ENCODE measurements at regions of chr2 and their contacts with region 1.

Region 1: DNA sequence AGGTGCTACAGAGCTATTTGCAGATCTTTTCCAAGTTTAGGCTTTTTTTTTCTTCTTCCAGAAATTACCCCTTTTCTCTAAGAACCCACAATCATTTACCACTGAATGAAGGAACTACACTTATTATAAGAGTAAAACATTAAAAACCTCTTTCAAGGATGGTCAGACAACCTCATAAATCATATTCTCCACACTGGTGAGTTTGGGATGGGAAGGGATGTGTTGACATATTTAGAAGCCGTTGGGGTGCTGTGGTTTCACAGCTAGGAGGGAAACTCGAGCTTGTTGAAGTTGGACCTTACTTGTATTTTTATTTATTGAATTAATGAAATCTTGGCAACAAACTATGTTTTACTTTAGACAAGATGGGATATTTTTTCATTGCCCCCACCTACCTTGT is 289.4 kb upstream of the MEIS1 start:
- DNase-seq: no peak
- H3K4me3 ChIP-seq: no peak overlapping the region
- H3K27ac ChIP-seq: no peak overlapping the region
- H3K4me1 ChIP-seq: no peaks in the 10 kb centered on the region
- H3K27me3 ChIP-seq: no peaks in the 10 kb centered on the region
- CTCF ChIP-seq: no peak
- POLR2A ChIP-seq: no peak

Region 2: DNA sequence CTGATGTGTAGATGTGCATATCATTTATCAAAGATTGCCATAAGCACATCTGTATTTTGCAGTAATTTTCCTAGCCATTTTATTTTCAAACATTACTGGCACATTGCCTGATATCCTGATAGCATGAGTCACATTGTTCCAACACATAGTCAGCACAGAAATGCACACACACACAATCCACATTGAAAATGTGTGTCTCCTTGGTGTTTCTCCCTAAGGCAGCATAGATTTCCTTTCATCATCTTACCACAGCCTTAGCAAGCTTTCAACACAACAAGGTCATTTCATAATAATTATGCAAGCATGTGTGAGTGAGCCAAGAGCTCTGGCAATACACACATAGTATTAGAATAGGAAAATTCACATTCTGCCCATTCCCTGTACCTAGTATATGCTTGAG is 44.1 kb after region 1 on chr2:
- intact Hi-C with region 1: no loop called
- DNase-seq: no peak
- H3K4me3 ChIP-seq: no peak overlapping the region
- H3K27ac ChIP-seq: no peak overlapping the region
- H3K4me1 ChIP-seq: no peaks in the 10 kb centered on the region
- H3K27me3 ChIP-seq: no peaks in the 10 kb centered on the region
- CTCF ChIP-seq: no peak
- POLR2A ChIP-seq: no peak

Region 3: GRCh38 chr2:66387016-66387753 is 241.7 kb after region 1 on chr2:
- intact Hi-C with region 1: no loop called
- DNase-seq: no peak
- H3K4me3 ChIP-seq: no peak overlapping the region
- H3K27ac ChIP-seq: no peak overlapping the region
- H3K4me1 ChIP-seq: no peaks in the 10 kb centered on the region
- H3K27me3 ChIP-seq: peaks cover 0 to 6% of the 10 kb centered on the region in 2 donors
- CTCF ChIP-seq: no peak
- POLR2A ChIP-seq: no peak

Region 4: DNA sequence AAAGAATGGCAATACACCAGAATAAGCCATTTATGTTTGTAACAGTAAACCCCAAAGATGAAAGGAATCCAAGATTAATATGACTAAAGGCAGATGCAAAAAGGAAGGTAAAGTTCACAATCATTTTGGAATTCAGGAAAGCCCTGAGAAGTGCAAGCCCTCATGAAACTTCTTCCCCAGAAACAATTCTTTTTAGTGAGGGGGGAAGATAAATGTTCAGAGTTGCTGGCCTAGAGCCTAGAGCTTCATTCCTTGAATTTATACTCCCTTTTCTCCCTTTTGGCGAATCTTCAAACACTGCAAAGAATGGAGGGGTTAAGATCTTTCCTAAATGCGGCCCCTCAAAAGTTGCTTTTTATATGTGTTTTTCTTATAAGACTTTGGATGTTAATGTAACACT is 658.2 kb after region 1 on chr2:
- intact Hi-C with region 1: loop called (anchors 10 kb)
- DNase-seq: no peak
- H3K4me3 ChIP-seq: no peak overlapping the region
- H3K27ac ChIP-seq: no peak overlapping the region
- H3K4me1 ChIP-seq: no peaks in the 10 kb centered on the region
- H3K27me3 ChIP-seq: no peaks in the 10 kb centered on the region
- CTCF ChIP-seq: no peak
- POLR2A ChIP-seq: no peak

Measured in breast epithelium (tissue), 4 donors.